ENCODE measurements at regions of chr1 and their contacts with region 1.

Region 1: GRCh38 chr1:30718636-30719405 is 4.6 kb downstream of the MATN1 start:
- DNase-seq: peak; percentile 96
- H3K4me3 ChIP-seq: peak overlapping the region; percentile 65 to 78 (median 76)
- H3K27ac ChIP-seq: peak overlapping the region; percentile 86
- H3K4me1 ChIP-seq: peaks cover 20% of the 10 kb centered on the region
- H3K27me3 ChIP-seq: no peaks in the 10 kb centered on the region
- CTCF ChIP-seq: peak; percentile 69 to 91

Region 2: DNA sequence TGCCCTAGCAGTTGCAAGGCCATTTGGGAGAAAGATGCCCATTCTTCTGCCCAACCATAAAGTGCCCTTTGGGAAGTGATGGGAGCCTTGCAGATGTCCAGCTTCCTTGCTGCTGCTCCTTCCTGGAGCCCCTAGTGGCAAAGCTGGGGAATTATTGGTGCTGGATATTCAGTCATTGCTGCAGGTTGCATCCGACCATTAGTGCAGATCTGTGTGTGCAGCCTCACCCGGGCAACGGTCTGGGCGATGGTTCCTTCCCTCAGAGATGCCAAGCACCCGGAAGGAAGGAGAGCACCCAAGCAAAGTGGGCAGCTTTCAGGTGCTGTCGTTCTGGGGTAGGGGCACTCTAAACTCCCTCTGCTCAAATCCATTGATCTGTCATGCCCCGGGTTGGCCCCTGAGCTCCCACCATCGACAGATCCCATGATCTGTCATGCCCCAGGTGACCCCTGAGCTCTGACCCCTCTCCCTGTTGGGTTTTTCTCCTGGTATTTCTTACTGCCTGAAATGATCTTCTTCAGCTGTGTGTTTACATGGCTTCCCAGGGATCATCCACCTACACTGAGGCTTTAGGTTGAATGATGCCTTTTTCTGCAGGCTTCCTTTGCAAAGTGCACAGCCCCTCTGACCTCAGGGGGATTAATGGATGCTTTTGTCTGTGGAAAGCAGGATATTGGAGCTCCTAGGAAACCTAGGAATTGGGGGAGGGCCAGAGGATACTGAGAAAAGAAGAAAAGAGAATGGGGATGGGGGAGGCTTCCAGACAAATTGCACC is 1015.0 kb before region 1 on chr1:
- CTCF ChIA-PET with region 1: no interaction called
- dilution Hi-C with region 1: no loop called
- in situ Hi-C with region 1: loop called in 1 of 2 experiments (anchors 25 kb)
- intact Hi-C with region 1: no loop called
- DNase-seq: peak; percentile 45
- H3K4me3 ChIP-seq: no peak overlapping the region
- H3K27ac ChIP-seq: no peak overlapping the region
- H3K4me1 ChIP-seq: peaks cover 16% of the 10 kb centered on the region
- H3K27me3 ChIP-seq: no peaks in the 10 kb centered on the region
- CTCF ChIP-seq: peak; percentile 91 to 95

Region 3: DNA sequence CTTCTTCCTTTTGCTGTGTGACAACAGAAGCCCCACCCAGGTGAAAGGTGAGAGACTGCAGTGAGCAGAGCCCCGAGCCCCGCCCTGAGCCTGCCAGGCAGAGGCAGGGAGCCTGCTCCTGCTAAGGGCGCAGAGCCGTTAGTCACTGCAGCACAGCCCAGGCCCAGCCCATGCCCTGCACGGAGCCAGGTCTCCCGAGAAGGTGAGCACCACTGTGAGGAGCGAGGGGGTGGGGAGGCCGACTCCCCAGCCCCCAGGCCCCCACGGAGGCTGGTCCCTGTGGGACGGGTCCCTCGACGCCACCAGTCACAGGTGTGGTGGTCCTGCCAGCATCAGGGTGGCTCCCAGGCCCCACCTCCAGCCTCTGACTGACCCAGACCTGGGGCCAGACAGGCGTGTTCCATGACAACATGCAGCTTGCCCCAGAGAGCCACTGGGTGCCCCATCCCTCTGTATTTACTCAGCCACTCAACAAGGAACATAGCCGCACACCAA is 61.0 kb before region 1 on chr1:
- CTCF ChIA-PET with region 1: no interaction called
- dilution Hi-C with region 1: loop called (anchors 5 kb)
- in situ Hi-C with region 1: no loop called
- intact Hi-C with region 1: no loop called
- DNase-seq: no peak
- H3K4me3 ChIP-seq: no peak overlapping the region
- H3K27ac ChIP-seq: no peak overlapping the region
- H3K4me1 ChIP-seq: peaks cover 18% of the 10 kb centered on the region
- H3K27me3 ChIP-seq: no peaks in the 10 kb centered on the region
- CTCF ChIP-seq: no peak

Region 4: DNA sequence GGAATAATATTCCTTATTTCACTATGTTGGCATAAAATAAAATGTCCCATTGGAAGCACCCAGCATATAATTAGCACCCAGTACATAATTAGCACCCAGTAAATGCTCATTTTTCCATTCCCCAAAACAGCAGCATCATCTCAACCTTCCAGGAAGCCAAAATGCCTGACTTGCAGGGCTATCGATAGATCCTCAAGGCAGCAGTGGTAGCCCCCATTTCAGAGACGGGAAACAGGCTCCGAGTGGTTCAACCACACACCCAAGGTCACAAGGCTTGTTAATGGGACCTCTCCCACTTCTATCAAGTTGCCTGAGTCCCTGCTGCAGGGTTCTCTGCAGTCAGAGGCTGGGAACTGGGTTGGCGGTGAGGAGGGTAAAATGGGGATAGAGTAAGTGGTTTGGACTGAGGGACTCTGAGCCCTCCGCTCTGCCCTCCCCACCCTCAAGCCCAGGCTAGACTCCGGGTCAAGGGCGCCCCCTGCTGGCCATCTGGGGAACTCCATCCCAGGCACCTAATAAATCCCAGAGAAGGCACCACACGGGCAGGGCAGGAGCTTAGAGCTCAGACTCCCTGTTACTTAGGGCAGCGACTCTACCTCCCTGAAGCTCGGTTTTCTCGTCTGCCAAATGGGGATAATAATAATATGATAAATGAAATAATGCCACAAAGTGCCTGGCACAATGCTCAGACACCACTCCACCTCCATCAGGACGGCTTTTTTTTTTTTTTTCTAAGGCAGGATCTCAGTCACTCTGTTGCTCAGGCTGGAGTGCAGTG is 60.7 kb after region 1 on chr1:
- CTCF ChIA-PET with region 1: interaction called, 111 read pairs
- dilution Hi-C with region 1: no loop called
- in situ Hi-C with region 1: loop called (anchors 5 kb)
- intact Hi-C with region 1: loop called (anchors 1 kb)
- DNase-seq: peak; percentile 65
- H3K4me3 ChIP-seq: no peak overlapping the region
- H3K27ac ChIP-seq: no peak overlapping the region
- H3K4me1 ChIP-seq: peaks cover 9% of the 10 kb centered on the region
- H3K27me3 ChIP-seq: no peaks in the 10 kb centered on the region
- CTCF ChIP-seq: peak; percentile 78 to 97

Region 5: GRCh38 chr1:30911046-30911954 is 192.5 kb after region 1 on chr1:
- CTCF ChIA-PET with region 1: no interaction called
- dilution Hi-C with region 1: no loop called
- in situ Hi-C with region 1: loop called (anchors 5 kb)
- intact Hi-C with region 1: loop called (anchors 1 kb)
- DNase-seq: peak; percentile 64
- H3K4me3 ChIP-seq: no peak overlapping the region
- H3K27ac ChIP-seq: no peak overlapping the region
- H3K4me1 ChIP-seq: peaks cover 31% of the 10 kb centered on the region
- H3K27me3 ChIP-seq: no peaks in the 10 kb centered on the region
- CTCF ChIP-seq: peak; percentile 77 to 91

Measured in mammary epithelial cell (primary cell).